Psoas muscle (tissue), 8 donors: ENCODE measurements at regions of chr13 and their contacts with region 1.

Region 1: DNA sequence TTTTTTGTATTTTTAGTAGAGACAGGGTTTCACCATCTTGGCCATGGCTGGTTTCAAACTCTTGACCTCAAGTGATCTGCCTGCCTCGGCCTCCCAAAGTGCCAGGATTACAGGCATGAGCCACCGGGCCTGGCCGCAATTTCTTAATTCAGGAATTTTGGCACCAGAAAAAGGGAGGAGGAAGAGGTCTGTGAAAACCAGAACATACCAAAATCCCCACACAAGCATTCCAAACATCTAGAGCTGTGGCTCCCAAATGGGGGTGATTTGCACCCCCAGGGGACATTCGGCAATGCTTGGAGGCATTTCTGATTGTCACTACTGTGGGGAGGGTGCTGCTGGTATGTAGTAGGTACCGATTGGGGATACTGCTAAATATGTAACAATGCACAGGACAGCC is 40.2 kb upstream of the ABCC4 start:
- DNase-seq: no peak
- ATAC-seq: no peak
- H3K4me3 ChIP-seq: no peak overlapping the region
- H3K27ac ChIP-seq: no peak overlapping the region
- H3K4me1 ChIP-seq: peaks cover 10% of the 10 kb centered on the region
- H3K27me3 ChIP-seq: no peaks in the 10 kb centered on the region
- CTCF ChIP-seq: no peak

Region 2: GRCh38 chr13:95296326-95296925 is 45.0 kb before region 1 on chr13:
- intact Hi-C with region 1: no loop called
- DNase-seq: peak; percentile 42 to 74
- ATAC-seq: peak; percentile 51 to 84 (median 74)
- H3K4me3 ChIP-seq: no peak overlapping the region
- H3K27ac ChIP-seq: no peak overlapping the region
- H3K4me1 ChIP-seq: peaks cover 22% of the 10 kb centered on the region
- H3K27me3 ChIP-seq: no peaks in the 10 kb centered on the region
- CTCF ChIP-seq: peak; percentile 81

Region 3: GRCh38 chr13:95378603-95379002 is 37.2 kb after region 1 on chr13:
- intact Hi-C with region 1: loop called in 1 of 2 experiments (anchors 5 kb)
- DNase-seq: peak; percentile 14 to 50
- ATAC-seq: peak; percentile 81 to 91 (median 83)
- H3K4me3 ChIP-seq: no peak overlapping the region
- H3K27ac ChIP-seq: peak overlapping the region; percentile 72
- H3K4me1 ChIP-seq: peaks cover 19% of the 10 kb centered on the region
- H3K27me3 ChIP-seq: no peaks in the 10 kb centered on the region
- CTCF ChIP-seq: no peak